ENCODE measurements at regions of chr14 and their contacts with region 1.

Region 1: DNA sequence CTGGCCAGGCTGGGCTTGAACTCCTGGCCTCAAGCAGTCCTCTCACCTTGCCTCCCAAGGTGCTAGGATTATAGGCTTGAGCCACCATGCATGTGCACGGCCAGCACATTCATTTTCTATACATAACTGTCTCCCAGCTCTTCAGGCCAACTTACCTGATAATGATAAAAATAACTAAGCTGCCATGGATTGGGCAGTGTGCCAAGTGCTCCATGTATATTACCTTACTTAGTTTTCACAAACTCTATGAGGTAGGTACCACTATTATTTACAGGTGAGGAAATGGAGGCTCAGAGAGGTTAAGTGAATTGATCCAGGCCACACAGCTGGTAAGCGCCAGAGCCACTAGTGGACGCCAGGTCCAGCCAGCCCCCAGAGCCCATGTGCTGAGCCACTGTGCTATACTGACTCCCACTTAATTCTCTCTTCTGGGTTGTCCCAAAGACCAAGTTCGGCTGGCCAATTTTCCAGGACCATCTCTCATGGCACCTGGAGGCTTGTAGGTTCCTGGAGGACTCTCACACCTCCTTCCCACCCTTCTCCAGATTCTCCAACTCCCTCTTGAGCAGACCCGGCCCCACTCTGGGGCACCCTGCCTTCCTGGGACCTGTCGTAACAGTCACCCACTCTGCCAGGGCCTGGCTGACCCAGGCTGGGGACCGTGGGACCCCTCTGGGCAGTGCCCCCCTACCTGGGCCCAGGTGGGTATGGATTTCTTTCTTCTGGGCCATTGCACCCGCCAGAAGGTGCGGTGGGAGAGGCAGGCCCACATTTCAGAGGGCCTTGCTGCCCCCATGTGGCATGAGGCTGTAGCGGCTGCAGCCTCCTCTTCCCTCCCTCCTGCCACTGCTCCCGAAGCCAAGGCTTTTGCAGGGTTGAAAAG is 30.2 kb upstream of the CIPC start:
- DNase-seq: no peak
- ATAC-seq: peak; percentile 85
- H3K4me3 ChIP-seq: no peak overlapping the region
- H3K27ac ChIP-seq: no peak overlapping the region
- H3K4me1 ChIP-seq: peaks cover 14% of the 10 kb centered on the region
- H3K27me3 ChIP-seq: peaks cover 0 to 10% of the 10 kb centered on the region in 2 experiments; a peak in 2 of 4 replicates
- CTCF ChIP-seq: peak; percentile 89 to 96 (median 96); a peak in 5 of 6 replicates
- EP300 ChIP-seq: no peak
- POLR2A ChIP-seq: no peak
- RAD21 ChIP-seq: peak; percentile 88

Region 2: DNA sequence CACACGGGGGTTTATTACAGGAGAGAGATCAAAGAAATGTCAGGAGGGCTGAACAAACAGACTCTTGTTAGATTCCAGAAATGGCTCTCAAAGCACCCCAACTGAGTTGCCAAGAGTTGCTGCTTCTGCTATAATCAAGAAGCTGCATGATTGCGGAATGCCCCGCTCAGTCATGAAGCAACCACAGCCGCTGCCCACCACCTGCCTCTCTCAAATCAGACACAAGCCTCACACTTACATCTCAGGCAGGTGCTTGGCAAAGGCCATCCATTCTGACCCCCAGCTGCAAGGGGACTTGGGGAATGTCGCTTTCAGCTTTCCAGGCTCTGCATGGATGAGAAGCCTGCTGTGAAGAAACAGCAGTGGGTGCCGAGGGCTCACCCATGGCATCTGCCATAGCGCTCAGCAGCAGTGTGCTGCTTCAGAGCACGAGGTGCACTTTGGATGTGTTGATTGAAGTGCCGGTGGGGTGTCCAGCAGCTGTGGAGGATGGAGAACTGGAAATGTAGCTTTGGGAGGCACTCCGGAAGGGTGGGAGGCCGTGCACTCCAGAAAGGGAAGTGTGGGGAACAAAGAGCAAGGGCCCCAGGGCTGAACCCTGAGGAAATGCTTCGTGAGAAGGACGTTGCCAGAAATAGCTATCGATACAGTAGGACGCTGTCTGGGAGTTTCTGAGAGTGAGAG is 204.0 kb before region 1 on chr14:
- CTCF ChIA-PET with region 1: interaction called, 848 read pairs
- POLR2A ChIA-PET with region 1: interaction called, 4 read pairs
- RAD21 ChIA-PET with region 1: interaction called, 4 read pairs
- SMC1A ChIA-PET with region 1: interaction called, 370 read pairs
- in situ Hi-C with region 1: no loop called
- intact Hi-C with region 1: no loop called
- DNase-seq: peak; percentile 13
- ATAC-seq: peak; percentile 83
- H3K4me3 ChIP-seq: no peak overlapping the region
- H3K27ac ChIP-seq: peak overlapping the region; percentile 43
- H3K4me1 ChIP-seq: peaks cover 25% of the 10 kb centered on the region
- H3K27me3 ChIP-seq: no peaks in the 10 kb centered on the region
- CTCF ChIP-seq: no peak
- EP300 ChIP-seq: no peak
- POLR2A ChIP-seq: no peak
- RAD21 ChIP-seq: no peak

Region 3: DNA sequence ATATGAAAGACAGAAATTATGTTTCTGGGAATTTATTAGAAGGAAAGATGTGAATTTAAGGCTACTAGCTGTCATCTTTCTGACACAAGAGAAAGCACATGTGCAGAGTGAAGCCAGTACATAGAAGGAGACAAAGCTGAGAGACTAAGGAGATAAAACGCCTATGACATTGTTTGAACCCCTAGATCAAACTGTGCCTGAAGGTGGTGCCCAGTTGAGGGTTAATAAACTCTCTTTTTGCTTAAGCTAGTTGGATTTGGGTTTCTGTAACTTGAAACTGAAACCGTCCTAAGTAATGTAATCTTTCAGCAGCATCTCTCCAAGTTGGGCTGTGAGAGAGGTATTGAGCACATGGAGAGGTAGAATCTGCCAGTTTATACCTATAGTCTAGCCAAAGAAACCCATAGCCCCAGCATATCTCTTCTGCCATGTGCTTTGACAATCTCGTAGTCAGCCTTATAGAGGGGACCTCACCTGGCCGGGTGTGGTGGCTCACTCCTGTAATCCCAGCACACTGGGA is 157.4 kb before region 1 on chr14:
- CTCF ChIA-PET with region 1: interaction called, 171 read pairs
- POLR2A ChIA-PET with region 1: interaction called, 5 read pairs
- RAD21 ChIA-PET with region 1: interaction called, 166 read pairs
- SMC1A ChIA-PET with region 1: interaction called, 164 read pairs
- in situ Hi-C with region 1: loop called (anchors 10 kb)
- intact Hi-C with region 1: loop called (anchors 1 kb)
- DNase-seq: no peak
- ATAC-seq: no peak
- H3K4me3 ChIP-seq: no peak overlapping the region
- H3K27ac ChIP-seq: no peak overlapping the region
- H3K4me1 ChIP-seq: peaks cover 9% of the 10 kb centered on the region
- H3K27me3 ChIP-seq: no peaks in the 10 kb centered on the region
- CTCF ChIP-seq: no peak
- EP300 ChIP-seq: no peak
- POLR2A ChIP-seq: no peak
- RAD21 ChIP-seq: no peak

Region 4: GRCh38 chr14:76962303-76962660 is 105.6 kb before region 1 on chr14:
- CTCF ChIA-PET with region 1: interaction called, 15 read pairs
- POLR2A ChIA-PET with region 1: interaction called, 3 read pairs
- RAD21 ChIA-PET with region 1: interaction called, 14 read pairs
- SMC1A ChIA-PET with region 1: interaction called, 12 read pairs
- in situ Hi-C with region 1: no loop called
- intact Hi-C with region 1: no loop called
- DNase-seq: no peak
- ATAC-seq: no peak
- H3K4me3 ChIP-seq: peak overlapping the region; percentile 50; the same call in 1 of the 2 replicates
- H3K27ac ChIP-seq: peak overlapping the region; percentile 90
- H3K4me1 ChIP-seq: peaks cover 77% of the 10 kb centered on the region
- H3K27me3 ChIP-seq: no peaks in the 10 kb centered on the region
- CTCF ChIP-seq: no peak
- EP300 ChIP-seq: no peak
- POLR2A ChIP-seq: no peak
- RAD21 ChIP-seq: no peak

Region 5: GRCh38 chr14:77086017-77086736 is 18.3 kb after region 1 on chr14:
- CTCF ChIA-PET with region 1: interaction called, 719 read pairs
- POLR2A ChIA-PET with region 1: interaction called, 9 read pairs
- RAD21 ChIA-PET with region 1: interaction called, 199 read pairs
- SMC1A ChIA-PET with region 1: interaction called, 185 read pairs
- in situ Hi-C with region 1: no loop called
- intact Hi-C with region 1: no loop called
- DNase-seq: no peak
- ATAC-seq: peak; percentile 82
- H3K4me3 ChIP-seq: no peak overlapping the region
- H3K27ac ChIP-seq: no peak overlapping the region
- H3K4me1 ChIP-seq: peaks cover 21% of the 10 kb centered on the region
- H3K27me3 ChIP-seq: no peaks in the 10 kb centered on the region; a peak in 1 of 4 replicates
- CTCF ChIP-seq: no peak
- EP300 ChIP-seq: no peak
- POLR2A ChIP-seq: no peak
- RAD21 ChIP-seq: no peak

Region 6: DNA sequence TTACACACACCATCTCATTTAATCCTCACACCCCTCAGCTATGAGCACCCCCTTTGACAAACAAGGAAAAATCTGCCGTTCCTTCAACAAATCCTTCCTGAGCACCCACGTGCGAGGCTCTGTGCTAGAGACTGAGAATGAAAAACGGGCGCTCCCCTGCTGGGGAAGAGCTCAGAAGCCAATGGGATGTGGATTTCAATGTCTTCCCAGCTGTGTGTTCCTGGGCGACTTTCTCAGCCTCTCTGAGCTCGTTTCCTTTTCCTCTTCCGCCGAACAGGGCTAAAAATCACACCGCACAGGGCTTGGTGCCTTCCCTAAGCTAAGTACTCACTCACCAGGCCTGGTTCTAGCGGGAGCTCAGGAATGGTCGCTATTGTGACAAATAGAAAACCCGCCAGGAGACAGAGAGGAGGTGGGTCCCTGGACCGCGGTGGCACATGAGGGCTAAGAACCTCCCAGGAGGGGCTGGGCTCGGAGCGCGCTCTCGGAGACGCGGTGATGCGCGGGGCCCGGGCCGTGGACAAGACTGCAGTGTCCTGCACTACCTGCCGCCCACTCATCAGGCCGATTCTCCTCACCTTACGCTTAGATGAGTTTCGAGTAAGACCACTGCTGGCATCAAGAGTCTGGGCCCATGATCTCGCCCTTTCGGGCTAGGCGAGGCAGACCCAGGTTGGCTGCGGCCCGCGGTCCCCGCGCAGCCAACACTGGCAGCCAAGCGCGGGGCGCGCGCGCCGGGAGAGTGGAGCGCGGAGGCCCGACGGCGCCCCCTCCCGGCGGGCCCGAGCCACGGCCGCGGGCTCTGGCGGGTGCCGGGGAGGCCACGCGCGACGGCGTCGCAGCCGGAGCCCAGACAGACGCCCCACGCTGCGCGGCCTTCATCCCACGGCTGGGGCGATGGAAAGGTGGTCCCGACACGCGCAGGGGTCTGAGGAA is 56.7 kb after region 1 on chr14:
- CTCF ChIA-PET with region 1: interaction called, 93 read pairs
- POLR2A ChIA-PET with region 1: interaction called, 3 read pairs
- RAD21 ChIA-PET with region 1: interaction called, 39 read pairs
- SMC1A ChIA-PET with region 1: interaction called, 45 read pairs
- in situ Hi-C with region 1: no loop called
- intact Hi-C with region 1: loop called (anchors 2 kb)
- DNase-seq: no peak
- ATAC-seq: peak; percentile 50
- H3K4me3 ChIP-seq: peak overlapping the region; percentile 48; the same call in 1 of the 2 replicates
- H3K27ac ChIP-seq: peak overlapping the region; percentile 4; the same call in 1 of the 2 replicates
- H3K4me1 ChIP-seq: peaks cover 49% of the 10 kb centered on the region
- H3K27me3 ChIP-seq: peaks cover 6 to 7% of the 10 kb centered on the region in 2 experiments; a peak in 2 of 4 replicates
- CTCF ChIP-seq: peak; percentile 33 to 61 (median 52); a peak in 4 of 6 replicates
- EP300 ChIP-seq: no peak
- POLR2A ChIP-seq: peak; percentile 45; the same call in 1 of the 2 replicates
- RAD21 ChIP-seq: peak; percentile 59; the same call in 1 of the 2 replicates